ENCODE measurements at regions of chr22 and their contacts with region 1.

Region 1: DNA sequence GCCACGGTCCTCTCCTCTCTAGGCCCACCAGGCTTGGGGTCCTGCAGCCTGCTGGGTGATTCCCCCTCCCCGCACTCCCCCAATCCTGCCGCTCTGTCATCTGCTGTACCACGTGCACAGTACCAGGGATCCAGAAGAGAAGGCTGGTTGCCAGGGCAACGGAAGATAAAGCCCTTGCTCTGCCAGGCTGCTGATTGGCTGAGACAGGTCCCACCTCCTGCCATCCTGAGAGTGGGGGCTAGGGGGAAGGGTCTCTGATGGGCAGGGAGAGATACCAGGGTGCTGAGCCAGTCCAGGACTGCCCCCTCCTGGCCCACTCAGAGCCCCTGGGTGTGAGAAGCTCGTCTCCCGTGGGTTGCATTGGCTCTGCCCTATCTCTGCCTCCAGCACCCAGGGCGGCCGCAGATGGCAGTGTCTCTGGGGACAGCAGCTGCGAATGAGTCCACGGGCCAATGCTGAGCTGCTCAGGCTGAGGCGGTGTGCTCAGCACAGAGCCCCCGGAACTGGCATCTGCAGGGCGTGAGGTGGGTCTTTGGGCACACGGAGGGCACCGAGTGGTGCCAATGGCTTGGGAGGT is at the start of gene SMIM45:
- DNase-seq: peak; percentile 57
- ATAC-seq: peak; percentile 87
- H3K4me3 Mint-ChIP-seq: peak within 1 kb of the TSS; percentile 35
- H3K27ac Mint-ChIP-seq: no peak within 1 kb of the TSS
- H3K4me1 Mint-ChIP-seq: peaks cover 60% of the 10 kb centered on the region
- H3K27me3 Mint-ChIP-seq: no peaks in the 10 kb centered on the region
- CTCF ChIP-seq: no peak

Region 2: DNA sequence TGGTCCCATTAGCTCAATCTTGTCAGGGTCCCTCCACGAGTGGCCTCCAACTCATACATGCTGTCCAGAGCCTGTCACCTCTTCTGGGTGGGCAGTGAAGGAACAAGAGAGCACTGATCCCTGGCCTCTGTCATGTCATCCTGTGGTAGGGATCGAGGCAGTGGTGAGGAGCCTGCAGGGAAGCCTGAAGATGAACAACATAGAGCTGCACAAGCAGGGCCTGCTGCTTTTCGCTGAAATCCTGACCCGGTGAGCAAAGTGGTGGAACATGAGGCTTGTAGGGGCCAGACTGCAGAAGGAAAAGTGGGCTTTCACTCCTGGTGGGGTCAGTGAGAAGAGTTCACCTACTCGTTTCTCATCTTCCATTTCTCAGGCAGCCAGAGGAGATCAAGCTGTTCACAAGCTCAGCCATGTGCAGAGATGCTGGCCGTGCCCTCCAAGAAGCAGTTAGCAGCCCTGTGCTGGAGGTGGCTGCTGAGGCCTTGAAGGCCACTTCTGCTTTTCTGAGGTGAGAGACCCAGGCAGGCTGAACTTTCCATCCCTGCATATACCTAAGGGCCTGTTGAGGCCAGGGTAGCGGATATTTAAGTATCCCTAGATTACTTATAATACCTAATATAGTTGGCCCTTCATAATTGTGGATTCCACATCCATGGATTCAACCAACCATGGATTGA is 219.8 kb before region 1 on chr22:
- CTCF ChIA-PET with region 1: no interaction called
- POLR2A ChIA-PET with region 1: no interaction called
- intact Hi-C with region 1: no loop called
- DNase-seq: no peak
- ATAC-seq: peak; percentile 86
- H3K4me3 Mint-ChIP-seq: no peak overlapping the region
- H3K27ac Mint-ChIP-seq: no peak overlapping the region
- H3K4me1 Mint-ChIP-seq: peaks cover 4% of the 10 kb centered on the region
- H3K27me3 Mint-ChIP-seq: no peaks in the 10 kb centered on the region
- CTCF ChIP-seq: no peak

Region 3: GRCh38 chr22:41925655-41926460 is 26.1 kb before region 1 on chr22:
- CTCF ChIA-PET with region 1: interaction called, 12 read pairs
- POLR2A ChIA-PET with region 1: interaction called, 68 read pairs
- intact Hi-C with region 1: no loop called
- DNase-seq: peak; percentile 90
- ATAC-seq: peak; percentile 45
- H3K4me3 Mint-ChIP-seq: peak overlapping the region; percentile 92
- H3K27ac Mint-ChIP-seq: peak overlapping the region; percentile 94
- H3K4me1 Mint-ChIP-seq: peaks cover 83% of the 10 kb centered on the region
- H3K27me3 Mint-ChIP-seq: no peaks in the 10 kb centered on the region
- CTCF ChIP-seq: peak; percentile 26